H1 (cell line): ENCODE measurements at regions of chr21 and their contacts with region 1.

Region 1: DNA sequence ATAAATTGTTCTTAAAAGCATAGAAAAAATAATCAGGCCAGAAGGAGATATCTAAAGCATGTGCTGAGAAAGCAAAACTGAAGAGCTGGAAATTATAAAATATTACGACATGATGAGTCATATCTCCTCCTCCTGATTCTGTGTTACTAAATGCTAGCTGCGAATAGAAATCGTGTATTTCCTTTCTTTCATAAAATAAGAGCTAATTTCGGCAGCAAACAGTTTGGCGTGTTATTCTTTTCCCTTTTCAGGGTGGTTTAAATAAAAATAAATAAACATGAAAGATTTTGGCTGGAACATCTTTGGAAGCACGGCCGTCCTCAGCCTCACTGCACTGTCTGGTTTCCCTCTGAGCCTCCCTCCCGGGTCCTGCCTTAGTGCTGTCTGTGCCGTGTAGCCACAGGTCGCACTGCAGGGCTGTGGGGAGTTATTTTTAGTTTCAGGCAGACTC is 56.0 kb downstream of the ADARB1 start:
- DNase-seq: no peak
- H3K4me3 ChIP-seq: no peak overlapping the region
- H3K27ac ChIP-seq: no peak overlapping the region
- H3K4me1 ChIP-seq: no peaks in the 10 kb centered on the region
- H3K27me3 ChIP-seq: no peaks in the 10 kb centered on the region
- CTCF ChIP-seq: no peak
- EP300 ChIP-seq: no peak
- POLR2A ChIP-seq: no peak
- RAD21 ChIP-seq: no peak

Region 2: GRCh38 chr21:44874497-44875315 is 255.6 kb before region 1 on chr21:
- CTCF ChIA-PET with region 1: no interaction called
- POLR2A ChIA-PET with region 1: no interaction called
- DNase-seq: peak in 1 of 2 experiments; percentile 73
- H3K4me3 ChIP-seq: peak overlapping the region; percentile 54 to 95 (median 64)
- H3K27ac ChIP-seq: no peak overlapping the region
- H3K4me1 ChIP-seq: peaks cover 6 to 9% (median 7%) of the 10 kb centered on the region in 4 experiments
- H3K27me3 ChIP-seq: peaks cover 0 to 22% (median 15%) of the 10 kb centered on the region in 4 experiments; a peak in 5 of 7 replicates
- CTCF ChIP-seq: no peak
- EP300 ChIP-seq: no peak
- POLR2A ChIP-seq: no peak
- RAD21 ChIP-seq: no peak

Region 3: GRCh38 chr21:44972821-44973220 is 157.5 kb before region 1 on chr21:
- CTCF ChIA-PET with region 1: interaction called, 28 read pairs
- POLR2A ChIA-PET with region 1: no interaction called
- DNase-seq: no peak
- H3K4me3 ChIP-seq: no peak overlapping the region
- H3K27ac ChIP-seq: no peak overlapping the region
- H3K4me1 ChIP-seq: no peaks in the 10 kb centered on the region; a peak in 1 of 7 replicates
- H3K27me3 ChIP-seq: no peaks in the 10 kb centered on the region
- CTCF ChIP-seq: no peak
- EP300 ChIP-seq: no peak
- POLR2A ChIP-seq: no peak
- RAD21 ChIP-seq: no peak

Region 4: GRCh38 chr21:44984631-44985440 is 145.5 kb before region 1 on chr21:
- CTCF ChIA-PET with region 1: interaction called, 16 read pairs
- POLR2A ChIA-PET with region 1: no interaction called
- DNase-seq: no peak
- H3K4me3 ChIP-seq: no peak overlapping the region
- H3K27ac ChIP-seq: no peak overlapping the region
- H3K4me1 ChIP-seq: peaks cover 0 to 3% (median 0%) of the 10 kb centered on the region in 4 experiments; a peak in 1 of 7 replicates
- H3K27me3 ChIP-seq: no peaks in the 10 kb centered on the region; a peak in 3 of 7 replicates
- CTCF ChIP-seq: no peak
- EP300 ChIP-seq: no peak
- POLR2A ChIP-seq: no peak
- RAD21 ChIP-seq: no peak

Region 5: DNA sequence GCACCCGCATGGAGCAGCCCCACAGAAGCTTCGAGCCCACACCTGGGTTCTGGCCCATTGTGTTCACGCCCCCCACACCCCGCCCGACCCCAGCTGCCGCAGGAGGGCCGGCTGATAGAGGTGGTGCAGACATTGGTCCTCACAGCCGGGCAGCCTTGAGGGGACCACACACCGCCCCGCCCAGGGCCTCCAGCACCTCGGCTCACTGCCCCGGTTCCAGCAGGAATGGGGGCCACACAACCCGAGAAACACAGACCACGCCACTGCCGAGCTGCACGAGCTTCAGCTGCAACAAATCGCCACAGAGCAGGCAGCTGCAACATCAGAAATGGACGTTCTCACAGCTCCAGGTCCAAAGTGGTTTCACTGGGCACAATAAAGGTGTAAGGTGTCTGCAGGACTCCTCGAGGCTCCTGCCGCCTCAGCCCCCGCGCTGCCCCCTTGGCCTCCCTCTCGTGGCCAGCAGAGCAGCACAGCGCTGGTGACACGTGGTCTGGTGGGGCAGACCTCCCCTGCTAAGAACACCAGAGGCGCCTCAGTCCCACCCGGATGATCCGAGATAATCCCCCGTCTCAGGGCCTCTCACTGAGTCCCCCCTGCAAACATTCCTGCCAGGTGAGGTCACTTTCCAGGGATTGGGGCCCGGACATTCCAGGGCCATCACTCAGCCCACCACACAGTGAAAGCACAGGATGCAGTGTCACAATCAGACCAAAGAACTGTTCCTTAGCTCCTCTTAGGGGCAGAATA is 118.3 kb before region 1 on chr21:
- CTCF ChIA-PET with region 1: interaction called, 14 read pairs
- POLR2A ChIA-PET with region 1: no interaction called
- DNase-seq: peak; percentile 82 to 84
- H3K4me3 ChIP-seq: peak overlapping the region in 1 of 4 experiments; percentile 32; a peak in 4 of 8 replicates
- H3K27ac ChIP-seq: peak overlapping the region; percentile 21; the same call in 1 of the 2 replicates
- H3K4me1 ChIP-seq: peaks cover 0 to 26% (median 12%) of the 10 kb centered on the region in 4 experiments; a peak in 6 of 7 replicates
- H3K27me3 ChIP-seq: peaks cover 0 to 9% (median 6%) of the 10 kb centered on the region in 4 experiments; a peak in 4 of 7 replicates
- CTCF ChIP-seq: peak in 2 of 3 experiments; percentile 10 to 26; a peak in 1 of 4 replicates
- EP300 ChIP-seq: no peak
- POLR2A ChIP-seq: no peak
- RAD21 ChIP-seq: peak in 1 of 2 experiments; percentile 25; a peak in 2 of 4 replicates

Region 6: GRCh38 chr21:45098867-45099266 is 31.5 kb before region 1 on chr21:
- CTCF ChIA-PET with region 1: interaction called, 99 read pairs
- POLR2A ChIA-PET with region 1: no interaction called
- DNase-seq: no peak
- H3K4me3 ChIP-seq: no peak overlapping the region
- H3K27ac ChIP-seq: no peak overlapping the region
- H3K4me1 ChIP-seq: no peaks in the 10 kb centered on the region; a peak in 1 of 7 replicates
- H3K27me3 ChIP-seq: no peaks in the 10 kb centered on the region
- CTCF ChIP-seq: peak in 2 of 3 experiments; percentile 41 to 72; a peak in 2 of 4 replicates
- EP300 ChIP-seq: no peak
- POLR2A ChIP-seq: no peak
- RAD21 ChIP-seq: peak; percentile 28 to 44; a peak in 2 of 4 replicates

Region 7: DNA sequence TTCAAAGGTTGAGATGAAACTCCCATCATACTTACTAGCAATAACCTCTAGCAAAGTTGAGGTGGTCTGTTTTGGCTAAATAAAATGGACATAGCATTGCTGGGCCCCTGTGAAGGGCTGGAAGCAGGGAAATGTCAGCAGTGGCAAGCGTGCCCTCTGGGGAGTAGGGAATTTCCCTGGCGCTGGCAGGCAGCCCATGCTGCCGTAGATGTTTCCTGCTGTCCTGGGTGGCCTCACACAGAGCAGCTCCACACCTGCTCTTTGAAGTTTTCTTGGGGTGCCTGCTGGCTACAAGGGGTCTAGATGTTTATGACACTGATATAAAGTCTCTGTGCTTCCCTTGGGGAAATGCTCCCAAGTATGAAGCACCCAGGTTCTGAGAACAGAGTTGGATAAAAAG is 25.8 kb before region 1 on chr21:
- CTCF ChIA-PET with region 1: interaction called, 99 read pairs
- POLR2A ChIA-PET with region 1: interaction called, 3 read pairs
- DNase-seq: no peak
- H3K4me3 ChIP-seq: no peak overlapping the region
- H3K27ac ChIP-seq: no peak overlapping the region
- H3K4me1 ChIP-seq: no peaks in the 10 kb centered on the region
- H3K27me3 ChIP-seq: no peaks in the 10 kb centered on the region
- CTCF ChIP-seq: no peak
- EP300 ChIP-seq: no peak
- POLR2A ChIP-seq: no peak
- RAD21 ChIP-seq: no peak

Region 8: DNA sequence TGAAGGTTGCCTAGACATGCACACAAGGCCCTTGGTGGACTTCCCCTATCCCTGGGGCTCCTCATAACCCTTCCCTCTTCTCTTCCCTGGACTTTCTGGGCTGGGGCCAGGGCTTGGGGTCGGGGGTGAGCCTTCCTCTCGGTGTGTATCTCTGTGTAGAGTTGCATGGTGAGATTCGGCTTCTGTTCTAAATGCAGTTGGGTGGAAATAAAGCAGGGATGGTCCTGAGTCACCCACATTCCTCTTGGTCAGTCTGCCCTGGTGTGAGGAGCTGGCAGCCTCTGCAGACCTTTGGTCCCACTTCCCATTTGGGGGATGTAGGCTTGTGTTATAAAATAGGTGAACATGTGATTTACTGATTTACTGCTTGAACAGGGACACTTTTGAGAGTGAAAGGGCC is 18.0 kb before region 1 on chr21:
- CTCF ChIA-PET with region 1: interaction called, 30 read pairs
- POLR2A ChIA-PET with region 1: interaction called, 3 read pairs
- DNase-seq: no peak
- H3K4me3 ChIP-seq: no peak overlapping the region
- H3K27ac ChIP-seq: no peak overlapping the region
- H3K4me1 ChIP-seq: no peaks in the 10 kb centered on the region
- H3K27me3 ChIP-seq: no peaks in the 10 kb centered on the region
- CTCF ChIP-seq: no peak
- EP300 ChIP-seq: no peak
- POLR2A ChIP-seq: no peak
- RAD21 ChIP-seq: no peak

Region 9: GRCh38 chr21:45228171-45228641 is 97.9 kb after region 1 on chr21:
- CTCF ChIA-PET with region 1: no interaction called
- POLR2A ChIA-PET with region 1: no interaction called
- DNase-seq: no peak
- H3K4me3 ChIP-seq: no peak overlapping the region
- H3K27ac ChIP-seq: no peak overlapping the region
- H3K4me1 ChIP-seq: no peaks in the 10 kb centered on the region
- H3K27me3 ChIP-seq: no peaks in the 10 kb centered on the region
- CTCF ChIP-seq: no peak
- EP300 ChIP-seq: no peak
- POLR2A ChIP-seq: no peak
- RAD21 ChIP-seq: no peak